ENCODE measurements at regions of chr4 and their contacts with region 1.

Region 1: DNA sequence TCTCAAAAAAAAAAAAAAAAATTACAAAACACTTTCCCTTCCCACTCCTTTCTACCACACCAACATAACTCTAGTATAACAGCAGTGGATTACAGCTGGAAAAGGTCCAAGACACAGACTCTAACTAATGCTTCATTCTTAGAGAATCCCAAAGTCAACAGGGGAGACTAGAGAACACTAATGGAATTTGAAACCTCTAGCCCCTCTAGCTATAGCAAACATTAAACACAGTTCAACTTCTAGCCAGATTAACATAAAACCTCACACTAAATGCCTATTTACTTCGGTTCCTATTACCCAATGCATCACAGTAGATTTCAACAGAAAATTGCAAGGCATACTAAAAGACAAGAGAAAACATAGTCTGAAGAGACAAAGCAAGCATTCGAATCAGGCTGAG is 10.5 kb upstream of the DHX15 start:
- DNase-seq: peak; percentile 93
- ATAC-seq: peak; percentile 83
- H3K4me3 ChIP-seq: peak overlapping the region; percentile 59
- H3K27ac ChIP-seq: peak overlapping the region; percentile 99
- H3K4me1 ChIP-seq: peaks cover 53% of the 10 kb centered on the region
- H3K27me3 ChIP-seq: no peaks in the 10 kb centered on the region
- CTCF ChIP-seq: no peak

Region 2: GRCh38 chr4:24413291-24413784 is 181.6 kb before region 1 on chr4:
- CTCF ChIA-PET with region 1: no interaction called
- POLR2A ChIA-PET with region 1: no interaction called
- intact Hi-C with region 1: no loop called
- DNase-seq: no peak
- ATAC-seq: no peak
- H3K4me3 ChIP-seq: no peak overlapping the region
- H3K27ac ChIP-seq: no peak overlapping the region
- H3K4me1 ChIP-seq: no peaks in the 10 kb centered on the region
- H3K27me3 ChIP-seq: peaks cover 53% of the 10 kb centered on the region
- CTCF ChIP-seq: no peak

Region 3: DNA sequence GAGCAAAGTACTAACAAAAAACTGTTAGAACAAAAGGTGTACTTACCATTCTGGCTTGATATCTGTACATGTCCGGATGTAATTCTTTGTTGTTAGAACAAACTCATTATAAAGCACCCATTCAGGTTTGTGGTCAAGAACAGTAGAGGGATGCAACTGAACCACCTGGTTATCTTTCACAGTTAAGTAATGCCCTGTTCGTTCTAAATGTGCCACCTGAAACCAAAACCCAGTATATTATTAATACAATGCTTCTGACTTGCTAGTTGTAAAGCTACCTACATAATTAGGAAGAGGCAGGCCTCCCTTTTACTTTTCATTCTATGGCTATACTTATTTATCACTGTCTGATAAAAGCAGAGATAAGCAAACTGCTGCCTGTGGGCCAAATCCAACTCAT is 65.3 kb before region 1 on chr4:
- CTCF ChIA-PET with region 1: no interaction called
- POLR2A ChIA-PET with region 1: no interaction called
- intact Hi-C with region 1: no loop called
- DNase-seq: no peak
- ATAC-seq: no peak
- H3K4me3 ChIP-seq: no peak overlapping the region
- H3K27ac ChIP-seq: no peak overlapping the region
- H3K4me1 ChIP-seq: no peaks in the 10 kb centered on the region
- H3K27me3 ChIP-seq: no peaks in the 10 kb centered on the region
- CTCF ChIP-seq: no peak

Region 4: DNA sequence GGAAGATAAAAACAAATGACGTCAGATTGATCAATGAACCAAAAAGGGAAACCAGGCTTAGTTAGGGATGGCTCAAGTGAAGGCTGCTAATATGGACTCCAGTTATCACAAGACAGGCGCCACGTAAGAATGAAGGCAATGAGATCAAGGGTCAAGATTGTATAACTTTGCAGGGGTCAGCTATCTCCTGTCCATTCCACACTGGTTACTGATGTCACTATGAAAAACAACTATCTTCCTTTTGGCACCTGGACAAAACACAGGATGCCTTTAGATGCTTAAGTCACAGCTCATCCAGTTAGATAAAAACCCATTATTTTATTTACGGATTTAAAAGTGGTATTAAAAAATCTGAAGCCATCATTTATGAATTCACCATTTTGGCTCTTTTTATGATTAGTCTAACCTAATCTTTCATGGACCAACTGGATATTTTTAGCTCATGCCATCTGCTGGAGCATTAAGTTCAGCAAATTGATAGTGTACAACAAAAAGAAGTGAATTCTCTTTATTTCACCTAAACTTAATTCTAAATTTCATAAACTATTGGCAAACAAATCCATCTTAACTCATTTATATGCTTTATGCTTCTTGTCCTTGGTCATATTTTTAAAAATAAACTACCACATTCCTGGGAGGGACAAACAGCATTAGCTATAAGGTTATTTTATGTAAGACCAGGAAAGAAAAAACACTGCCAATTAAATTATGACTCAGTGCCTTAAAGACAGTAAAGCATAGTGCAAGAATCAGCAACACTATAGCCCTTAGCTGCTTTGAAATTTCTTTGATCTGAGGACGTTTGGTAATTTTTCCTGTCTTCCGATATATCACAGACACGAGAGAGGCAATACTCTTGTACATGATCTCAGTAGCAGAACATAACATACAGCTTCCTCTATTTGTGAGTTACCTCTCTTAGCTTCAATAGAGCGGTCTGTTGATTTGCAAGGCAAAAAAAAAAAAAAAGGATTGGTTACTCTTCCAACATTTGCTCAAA is 37.6 kb before region 1 on chr4:
- CTCF ChIA-PET with region 1: no interaction called
- POLR2A ChIA-PET with region 1: no interaction called
- intact Hi-C with region 1: loop called (anchors 5 kb)
- DNase-seq: peak; percentile 35
- ATAC-seq: peak; percentile 73
- H3K4me3 ChIP-seq: no peak overlapping the region
- H3K27ac ChIP-seq: no peak overlapping the region
- H3K4me1 ChIP-seq: peaks cover 49% of the 10 kb centered on the region
- H3K27me3 ChIP-seq: no peaks in the 10 kb centered on the region
- CTCF ChIP-seq: no peak

Region 5: DNA sequence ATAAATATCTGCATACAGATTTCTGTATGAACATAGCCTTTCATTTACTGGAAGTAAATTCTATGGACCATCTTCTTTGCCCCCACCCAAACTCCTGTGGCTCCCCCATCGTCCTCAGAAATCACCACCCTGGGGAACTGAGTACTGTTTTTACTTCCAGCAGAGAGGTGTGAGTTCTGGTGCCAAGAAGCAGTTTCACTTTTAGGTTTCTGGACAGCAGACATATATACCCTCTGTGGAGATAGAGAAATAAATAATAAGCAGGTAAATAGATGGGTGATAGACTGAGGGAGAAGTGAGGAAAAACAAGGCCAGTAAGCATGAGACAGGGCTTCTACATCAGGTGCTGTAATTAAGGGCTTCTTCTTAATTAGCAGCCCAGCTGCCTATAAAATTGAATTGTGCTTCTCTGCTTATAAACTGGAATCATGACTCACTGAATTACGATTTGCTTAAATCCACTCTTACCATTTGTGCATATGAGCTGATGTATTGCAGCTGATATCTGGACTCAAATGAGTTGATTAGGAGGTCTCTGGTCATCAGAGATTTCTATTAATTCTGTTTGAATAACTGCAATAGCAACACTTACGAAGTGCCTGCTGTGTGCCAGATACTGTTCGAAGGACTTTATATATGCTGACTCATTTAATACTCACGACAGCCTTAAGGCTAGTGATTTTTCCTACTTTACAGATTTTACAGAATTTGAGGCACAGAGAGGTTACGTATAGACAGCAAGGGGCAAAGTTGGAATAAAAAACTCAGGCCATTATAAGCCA is 50.3 kb after region 1 on chr4:
- CTCF ChIA-PET with region 1: no interaction called
- POLR2A ChIA-PET with region 1: no interaction called
- intact Hi-C with region 1: loop called (anchors 1 kb)
- DNase-seq: peak; percentile 49
- ATAC-seq: peak; percentile 74
- H3K4me3 ChIP-seq: peak overlapping the region; percentile 61
- H3K27ac ChIP-seq: peak overlapping the region; percentile 9; the same call in 1 of the 2 replicates
- H3K4me1 ChIP-seq: peaks cover 27% of the 10 kb centered on the region
- H3K27me3 ChIP-seq: no peaks in the 10 kb centered on the region
- CTCF ChIP-seq: no peak

Region 6: DNA sequence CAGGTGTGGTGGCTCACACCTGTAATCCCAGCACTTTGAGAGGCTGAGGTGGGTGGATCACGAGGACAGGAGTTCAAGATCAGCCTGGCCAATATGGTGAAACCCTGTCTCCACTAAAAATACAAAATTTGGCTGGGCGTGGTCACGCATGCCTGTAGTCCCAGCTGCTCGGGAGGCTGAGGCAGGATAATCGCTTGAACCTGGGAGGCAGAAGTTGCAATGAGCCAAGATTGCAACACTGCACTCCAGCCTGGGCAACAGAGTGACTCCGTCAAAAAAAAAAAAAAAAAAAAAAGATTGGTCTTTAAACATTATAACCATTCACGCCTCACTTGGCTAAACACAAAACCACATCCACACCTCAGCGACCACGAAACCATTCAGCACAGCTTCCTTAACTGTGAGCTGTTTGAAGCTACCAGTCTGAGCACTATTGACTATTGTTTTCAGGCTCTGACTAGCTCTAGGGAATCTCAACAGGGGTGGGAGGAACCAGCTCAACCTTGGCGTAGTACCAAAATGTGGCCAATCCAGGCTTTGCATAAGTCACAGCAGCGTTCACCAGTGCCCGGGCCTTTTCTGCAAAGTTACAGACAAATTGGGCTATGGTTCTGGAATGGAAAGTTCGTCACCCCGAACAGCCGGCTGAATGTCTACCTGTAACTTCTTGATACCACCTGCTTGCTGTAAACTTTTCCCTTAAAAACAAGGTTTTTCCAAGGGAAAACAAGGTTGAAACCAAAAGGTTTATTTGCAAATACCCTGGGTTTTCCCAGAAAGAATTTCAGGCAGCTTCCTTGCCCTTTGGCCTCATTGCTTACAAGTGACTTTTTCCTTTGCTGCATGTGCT is 63.1 kb after region 1 on chr4:
- CTCF ChIA-PET with region 1: no interaction called
- POLR2A ChIA-PET with region 1: no interaction called
- intact Hi-C with region 1: loop called (anchors 1 kb)
- DNase-seq: peak; percentile 94
- ATAC-seq: peak; percentile 82
- H3K4me3 ChIP-seq: peak overlapping the region; percentile 44; the same call in 1 of the 2 replicates
- H3K27ac ChIP-seq: peak overlapping the region; percentile 82
- H3K4me1 ChIP-seq: peaks cover 40% of the 10 kb centered on the region
- H3K27me3 ChIP-seq: no peaks in the 10 kb centered on the region
- CTCF ChIP-seq: no peak

Region 7: GRCh38 chr4:24753500-24753899 is 158.6 kb after region 1 on chr4:
- CTCF ChIA-PET with region 1: no interaction called
- POLR2A ChIA-PET with region 1: no interaction called
- intact Hi-C with region 1: loop called (anchors 2 kb)
- DNase-seq: peak; percentile 98
- ATAC-seq: peak; percentile 90
- H3K4me3 ChIP-seq: no peak overlapping the region
- H3K27ac ChIP-seq: peak overlapping the region; percentile 93
- H3K4me1 ChIP-seq: peaks cover 24% of the 10 kb centered on the region
- H3K27me3 ChIP-seq: no peaks in the 10 kb centered on the region
- CTCF ChIP-seq: no peak

Region 8: GRCh38 chr4:24781999-24782745 is 187.3 kb after region 1 on chr4:
- CTCF ChIA-PET with region 1: no interaction called
- POLR2A ChIA-PET with region 1: interaction called, 5 read pairs
- intact Hi-C with region 1: loop called (anchors 5 kb)
- DNase-seq: peak; percentile 72
- ATAC-seq: peak; percentile 82
- H3K4me3 ChIP-seq: no peak overlapping the region
- H3K27ac ChIP-seq: peak overlapping the region; percentile 78
- H3K4me1 ChIP-seq: peaks cover 26% of the 10 kb centered on the region
- H3K27me3 ChIP-seq: no peaks in the 10 kb centered on the region
- CTCF ChIP-seq: no peak